ENCODE measurements at regions of chr16 and their contacts with region 1.

Region 1: DNA sequence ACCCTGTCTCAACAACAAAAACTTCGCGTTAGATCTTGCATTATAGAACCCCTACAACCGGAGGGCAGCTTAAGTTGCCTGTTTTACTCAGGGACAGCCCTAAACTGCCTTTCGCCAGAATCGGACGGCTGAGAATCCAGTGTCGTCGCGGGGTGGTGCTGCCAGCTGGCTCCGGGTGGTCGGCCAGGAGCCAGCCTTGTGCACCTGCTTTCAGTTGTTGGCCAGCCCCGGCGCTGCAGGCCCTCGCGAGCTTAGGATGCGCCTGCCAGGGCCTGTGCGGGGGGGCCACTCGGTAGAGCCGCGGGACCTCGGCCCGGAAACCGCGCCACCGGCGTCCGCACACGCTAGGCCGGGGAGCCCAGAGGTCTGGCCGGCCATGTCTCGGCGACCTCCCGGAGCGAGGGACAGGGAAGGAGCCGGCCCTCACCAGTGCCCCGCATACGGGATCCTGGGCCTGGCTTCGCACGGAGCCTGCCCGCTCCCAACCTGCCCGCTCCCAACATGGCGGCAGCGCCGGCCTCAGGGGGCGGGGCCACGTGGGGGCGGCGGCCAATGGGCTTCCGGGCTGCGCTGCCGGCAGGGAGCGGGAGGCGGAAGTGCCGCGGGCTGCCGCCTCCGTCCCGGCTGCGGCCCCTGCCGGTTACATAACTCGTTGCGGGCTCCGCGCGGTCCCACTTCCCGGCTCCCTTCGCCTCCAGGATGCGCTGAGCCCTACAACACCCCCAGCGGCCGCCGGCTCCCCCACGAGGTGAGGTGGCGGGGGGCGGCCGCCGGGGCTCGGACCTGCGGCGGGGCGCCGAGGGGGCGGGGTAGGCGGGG is 14.2 kb downstream of the NAA60 start:
- DNase-seq: peak; percentile 91
- H3K4me3 Mint-ChIP-seq: peak overlapping the region; percentile 79
- H3K27ac Mint-ChIP-seq: peak overlapping the region; percentile 88
- H3K4me1 Mint-ChIP-seq: peaks cover 44% of the 10 kb centered on the region
- H3K27me3 Mint-ChIP-seq: no peaks in the 10 kb centered on the region

Region 2: GRCh38 chr16:3188925-3189825 is 268.5 kb before region 1 on chr16:
- CTCF ChIA-PET with region 1: no interaction called
- intact Hi-C with region 1: loop called (anchors 2 kb)
- DNase-seq: peak; percentile 76
- H3K4me3 Mint-ChIP-seq: peak overlapping the region; percentile 79
- H3K27ac Mint-ChIP-seq: peak overlapping the region; percentile 84
- H3K4me1 Mint-ChIP-seq: peaks cover 46% of the 10 kb centered on the region
- H3K27me3 Mint-ChIP-seq: peaks cover 73% of the 10 kb centered on the region

Region 3: DNA sequence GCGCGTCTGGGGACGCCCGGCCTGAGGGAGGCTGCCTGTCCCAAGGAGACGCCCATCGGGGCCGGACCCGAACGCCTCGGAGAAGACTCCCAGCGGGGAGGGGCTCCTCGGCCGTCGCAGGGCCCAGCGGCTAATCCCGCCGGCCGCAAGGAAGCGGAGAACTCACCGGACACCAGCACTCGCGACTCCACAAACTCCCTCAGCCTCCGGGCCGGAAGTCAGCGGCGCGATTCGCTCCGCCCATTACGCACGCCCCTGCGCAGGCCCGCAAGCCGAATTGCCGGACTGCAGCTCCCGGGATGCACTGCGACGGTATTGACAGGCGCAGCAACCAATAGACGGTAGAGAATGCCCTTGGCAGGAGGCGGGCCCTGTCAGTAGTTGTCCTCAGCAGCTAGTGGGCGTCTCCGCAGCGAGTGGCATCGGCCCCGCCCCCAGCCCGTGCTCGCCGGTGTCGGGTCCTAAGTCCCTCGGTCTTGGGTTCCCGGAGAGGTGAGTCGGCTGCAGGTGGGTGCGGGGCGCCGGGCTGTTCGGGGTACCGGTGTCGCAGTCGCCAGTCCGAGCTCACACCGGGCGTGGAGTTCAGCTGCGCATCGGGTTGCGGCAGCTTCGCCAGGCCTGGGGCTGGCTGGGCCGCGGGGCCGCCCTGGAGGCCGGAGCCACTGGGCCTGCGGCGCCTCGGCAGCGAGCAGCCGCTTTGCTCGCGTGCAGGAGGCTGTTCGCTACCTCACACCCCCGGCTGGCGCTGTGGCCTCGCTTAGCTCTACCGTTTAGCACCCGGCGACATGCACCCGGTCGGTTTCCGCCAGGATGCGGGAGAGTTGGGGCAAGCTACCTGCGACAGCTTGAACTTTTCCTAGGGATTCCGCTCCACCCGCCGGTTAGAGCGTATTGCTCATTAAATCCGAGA is 56.6 kb before region 1 on chr16 and contains the starts of genes ZNF174 and ZSCAN32:
- CTCF ChIA-PET with region 1: interaction called, 4 read pairs
- intact Hi-C with region 1: loop called (anchors 2 kb)
- DNase-seq: peak; percentile 99
- H3K4me3 Mint-ChIP-seq: peak within 1 kb of the TSS; percentile 86
- H3K27ac Mint-ChIP-seq: peak within 1 kb of the TSS; percentile 75
- H3K4me1 Mint-ChIP-seq: peaks cover 39% of the 10 kb centered on the region
- H3K27me3 Mint-ChIP-seq: no peaks in the 10 kb centered on the region
- total RNA-seq, gene ZNF174: 5.8 to 6.3 TPM
- total RNA-seq, gene ZSCAN32: 6.5 to 7.9 TPM

Region 4: GRCh38 chr16:3503523-3503922 is 45.9 kb after region 1 on chr16:
- CTCF ChIA-PET with region 1: no interaction called
- intact Hi-C with region 1: loop called (anchors 1 kb)
- DNase-seq: peak; percentile 73
- H3K4me3 Mint-ChIP-seq: peak overlapping the region; percentile 88
- H3K27ac Mint-ChIP-seq: peak overlapping the region; percentile 89
- H3K4me1 Mint-ChIP-seq: peaks cover 68% of the 10 kb centered on the region
- H3K27me3 Mint-ChIP-seq: no peaks in the 10 kb centered on the region

Region 5: GRCh38 chr16:3514621-3515020 is 57.0 kb after region 1 on chr16:
- CTCF ChIA-PET with region 1: no interaction called
- intact Hi-C with region 1: no loop called
- DNase-seq: no peak
- H3K4me3 Mint-ChIP-seq: no peak overlapping the region
- H3K27ac Mint-ChIP-seq: peak overlapping the region; percentile 77
- H3K4me1 Mint-ChIP-seq: peaks cover 33% of the 10 kb centered on the region
- H3K27me3 Mint-ChIP-seq: no peaks in the 10 kb centered on the region

Measured in activated naive CD4-positive, alpha-beta T cell treated with anti-CD3 and anti-CD28 coated beads for 36 hours (primary cell).